CD8-positive, alpha-beta T cell (primary cell): ENCODE measurements at regions of chr1 and their contacts with region 1.

Region 1: GRCh38 chr1:247390116-247390791 is 25.7 kb upstream of the NLRP3 start:
- DNase-seq: peak; percentile 69 to 92 (median 82)
- ATAC-seq: peak; percentile 98
- H3K4me3 ChIP-seq: peak overlapping the region in 1 of 2 experiments; percentile 31
- H3K4me3 Mint-ChIP-seq: peak overlapping the region; percentile 71
- H3K27ac ChIP-seq: peak overlapping the region in 1 of 2 experiments; percentile 17
- H3K27ac Mint-ChIP-seq: peak overlapping the region; percentile 80
- H3K4me1 ChIP-seq: no peaks in the 10 kb centered on the region
- H3K4me1 Mint-ChIP-seq: peaks cover 12% of the 10 kb centered on the region
- H3K27me3 ChIP-seq: no peaks in the 10 kb centered on the region
- H3K27me3 Mint-ChIP-seq: no peaks in the 10 kb centered on the region
- CTCF ChIP-seq: peak; percentile 90

Region 2: DNA sequence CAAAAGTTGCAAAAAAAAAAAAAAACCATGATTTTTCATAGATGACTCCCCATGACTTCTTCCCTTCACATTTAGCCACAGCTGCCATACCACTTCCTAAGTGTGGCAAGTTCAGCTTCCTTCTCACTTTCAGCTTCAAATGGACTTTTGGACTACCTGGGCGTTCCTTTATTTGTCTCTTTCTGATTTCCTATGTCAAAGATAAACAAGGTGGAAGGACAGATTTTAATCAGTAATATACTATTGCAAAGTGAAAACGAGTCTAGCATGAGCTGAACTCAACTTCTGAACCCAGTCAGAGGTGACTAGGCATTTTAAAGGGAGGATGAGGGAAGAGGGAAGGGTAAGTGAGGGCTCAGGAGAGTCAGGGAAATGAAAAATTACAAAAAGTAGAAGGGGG is 680.4 kb before region 1 on chr1:
- CTCF ChIA-PET with region 1: no interaction called
- POLR2A ChIA-PET with region 1: no interaction called
- intact Hi-C with region 1: no loop called
- DNase-seq: no peak
- ATAC-seq: no peak
- H3K4me3 ChIP-seq: no peak overlapping the region
- H3K4me3 Mint-ChIP-seq: no peak overlapping the region
- H3K27ac ChIP-seq: no peak overlapping the region
- H3K27ac Mint-ChIP-seq: no peak overlapping the region
- H3K4me1 ChIP-seq: no peaks in the 10 kb centered on the region
- H3K4me1 Mint-ChIP-seq: peaks cover 1% of the 10 kb centered on the region
- H3K27me3 ChIP-seq: no peaks in the 10 kb centered on the region
- H3K27me3 Mint-ChIP-seq: peaks cover 7% of the 10 kb centered on the region
- CTCF ChIP-seq: no peak

Region 3: DNA sequence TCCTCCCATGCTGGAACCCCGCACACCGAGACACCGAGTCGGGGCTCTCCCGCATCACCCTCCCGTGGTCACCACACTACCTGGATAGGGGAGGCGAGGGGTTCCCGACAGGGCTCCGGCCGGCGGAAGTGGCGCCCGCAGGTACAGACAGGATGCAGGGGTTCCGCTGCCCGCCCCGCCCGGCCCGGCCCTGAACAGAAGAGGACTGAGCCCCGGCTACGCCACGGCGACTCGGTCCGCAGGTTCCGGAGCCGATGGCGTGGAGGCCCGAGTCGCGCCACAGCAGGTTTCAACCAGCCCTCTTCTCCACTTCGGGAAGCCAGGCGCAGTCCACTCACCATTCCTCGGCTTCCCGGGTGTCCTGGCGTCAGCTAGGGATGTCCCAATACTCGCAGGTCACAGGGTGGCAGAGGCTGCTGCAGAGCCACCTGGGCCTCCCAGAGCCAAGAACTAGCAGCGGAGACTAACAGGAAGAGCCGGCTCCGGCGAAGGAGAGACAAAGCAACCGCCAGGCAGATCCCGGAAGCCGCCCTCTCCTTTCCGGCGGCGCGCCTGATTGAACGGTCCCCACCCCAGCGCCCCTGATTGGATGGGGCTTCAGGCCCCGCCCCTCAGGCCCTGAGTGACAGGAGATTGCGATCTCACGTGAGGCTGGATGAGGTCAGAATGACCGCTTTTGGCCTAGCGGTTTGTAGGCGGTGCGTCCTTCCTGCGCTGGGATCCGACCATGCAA is 286.2 kb before region 1 on chr1 and contains the start of gene ZNF669:
- CTCF ChIA-PET with region 1: no interaction called
- POLR2A ChIA-PET with region 1: no interaction called
- intact Hi-C with region 1: loop called in 1 of 2 experiments (anchors 5 kb)
- DNase-seq: peak; percentile 83 to 94 (median 91)
- ATAC-seq: peak; percentile 98
- H3K4me3 ChIP-seq: peak within 1 kb of the TSS; percentile 74 to 96
- H3K4me3 Mint-ChIP-seq: peak within 1 kb of the TSS; percentile 89
- H3K27ac ChIP-seq: peak within 1 kb of the TSS; percentile 62 to 85
- H3K27ac Mint-ChIP-seq: peak within 1 kb of the TSS; percentile 85
- H3K4me1 ChIP-seq: peaks cover 9% of the 10 kb centered on the region
- H3K4me1 Mint-ChIP-seq: peaks cover 21% of the 10 kb centered on the region
- H3K27me3 ChIP-seq: no peaks in the 10 kb centered on the region
- H3K27me3 Mint-ChIP-seq: peaks cover 20% of the 10 kb centered on the region
- CTCF ChIP-seq: no peak
- total RNA-seq, gene ZNF669: 15.5 to 23.2 TPM

Region 4: GRCh38 chr1:247401310-247402119 is 11.3 kb after region 1 on chr1:
- CTCF ChIA-PET with region 1: interaction called, 15 read pairs
- POLR2A ChIA-PET with region 1: no interaction called
- intact Hi-C with region 1: no loop called
- DNase-seq: no peak
- ATAC-seq: no peak
- H3K4me3 ChIP-seq: no peak overlapping the region
- H3K4me3 Mint-ChIP-seq: no peak overlapping the region
- H3K27ac ChIP-seq: no peak overlapping the region
- H3K27ac Mint-ChIP-seq: no peak overlapping the region
- H3K4me1 ChIP-seq: peaks cover 2% of the 10 kb centered on the region
- H3K4me1 Mint-ChIP-seq: peaks cover 1% of the 10 kb centered on the region
- H3K27me3 ChIP-seq: no peaks in the 10 kb centered on the region
- H3K27me3 Mint-ChIP-seq: no peaks in the 10 kb centered on the region
- CTCF ChIP-seq: no peak

Region 5: DNA sequence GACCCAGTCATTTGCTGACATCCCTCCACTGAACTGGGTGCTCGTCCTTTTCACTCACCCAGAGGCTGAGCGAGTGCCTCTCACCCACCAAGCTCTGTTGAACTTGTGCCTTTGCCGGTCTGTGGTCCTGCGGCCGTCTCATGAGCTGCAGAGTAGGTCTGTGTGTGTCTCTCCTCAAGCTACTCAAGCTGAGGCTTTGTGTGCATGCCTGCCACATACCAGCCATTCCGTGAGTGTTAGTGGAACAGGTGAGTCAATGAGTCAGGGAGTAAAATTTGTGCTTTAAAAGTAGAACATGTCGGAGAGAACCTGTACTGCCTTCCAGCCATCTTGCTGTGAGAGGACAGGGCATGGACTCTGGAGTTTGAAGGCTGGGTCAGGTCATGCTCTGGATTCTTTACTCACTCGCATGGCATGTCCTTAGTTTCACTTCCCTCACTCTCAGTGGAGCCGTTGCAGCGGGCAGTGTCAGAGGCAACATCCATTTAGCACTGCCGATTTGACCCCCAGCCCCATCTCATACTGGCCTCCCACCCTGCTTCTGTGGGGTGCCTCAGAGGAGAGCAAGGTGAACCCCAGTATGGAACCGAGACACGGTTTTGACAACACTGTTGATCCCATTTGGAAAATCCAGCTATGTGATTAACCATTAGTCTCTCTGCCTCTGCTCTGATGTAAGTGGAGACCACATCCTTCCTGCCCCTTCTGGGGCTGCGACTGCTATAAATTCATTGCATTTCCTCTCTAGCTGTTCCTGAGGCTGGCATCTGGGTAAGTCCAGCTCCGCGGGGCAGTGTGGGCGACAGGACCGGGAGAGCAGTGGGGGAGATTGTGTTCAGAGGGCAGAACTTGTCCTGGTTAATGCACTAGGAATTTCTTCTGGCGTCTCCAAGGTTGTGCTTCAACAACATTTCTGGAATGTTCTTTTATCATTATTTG is 25.4 kb after region 1 on chr1 and contains the start of gene NLRP3:
- CTCF ChIA-PET with region 1: interaction called, 17 read pairs
- POLR2A ChIA-PET with region 1: interaction called, 12 read pairs
- intact Hi-C with region 1: no loop called
- DNase-seq: peak; percentile 10 to 74 (median 48)
- ATAC-seq: peak; percentile 70
- H3K4me3 ChIP-seq: peak within 1 kb of the TSS; percentile 51 to 56
- H3K4me3 Mint-ChIP-seq: peak within 1 kb of the TSS; percentile 92
- H3K27ac ChIP-seq: peak within 1 kb of the TSS; percentile 10 to 32
- H3K27ac Mint-ChIP-seq: peak within 1 kb of the TSS; percentile 71
- H3K4me1 ChIP-seq: peaks cover 21% of the 10 kb centered on the region
- H3K4me1 Mint-ChIP-seq: peaks cover 42% of the 10 kb centered on the region
- H3K27me3 ChIP-seq: no peaks in the 10 kb centered on the region
- H3K27me3 Mint-ChIP-seq: no peaks in the 10 kb centered on the region
- CTCF ChIP-seq: no peak
- total RNA-seq, gene NLRP3: 3.7 to 4.1 TPM

Region 6: DNA sequence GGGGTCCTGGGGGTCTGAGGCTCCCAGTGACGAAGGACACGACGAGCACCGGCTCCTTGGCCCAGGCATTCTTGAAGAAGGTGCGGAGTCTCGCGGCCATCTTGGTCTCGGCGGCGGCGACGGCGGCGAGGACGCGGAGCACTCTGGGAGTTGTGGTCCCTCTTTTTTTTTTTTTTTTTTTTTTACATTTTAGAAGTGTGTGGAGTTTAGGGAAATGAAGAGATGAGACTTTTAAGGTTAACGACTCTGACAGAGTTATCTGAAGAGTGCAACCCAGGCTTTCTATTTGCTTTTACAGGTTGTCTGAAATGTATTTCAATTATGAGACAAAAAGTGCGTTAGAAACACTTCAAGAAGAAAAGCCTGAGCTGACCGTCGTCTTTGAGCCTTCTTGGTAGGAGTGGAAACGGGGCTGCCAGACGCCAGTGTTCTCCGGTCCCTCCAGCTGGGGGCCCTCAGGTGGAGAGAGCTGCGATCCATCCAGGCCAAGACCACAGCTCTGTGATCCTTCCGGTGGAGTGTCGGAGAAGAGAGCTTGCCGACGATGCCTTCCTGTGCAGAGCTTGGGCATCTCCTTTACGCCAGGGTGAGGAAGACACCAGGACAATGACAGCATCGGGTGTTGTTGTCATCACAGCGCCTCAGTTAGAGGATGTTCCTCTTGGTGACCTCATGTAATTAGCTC is 58.0 kb after region 1 on chr1:
- CTCF ChIA-PET with region 1: interaction called, 10 read pairs
- POLR2A ChIA-PET with region 1: no interaction called
- intact Hi-C with region 1: loop called in 1 of 2 experiments (anchors 10 kb)
- DNase-seq: peak in 7 of 9 experiments; percentile 4 to 56 (median 27)
- ATAC-seq: no peak
- H3K4me3 ChIP-seq: peak overlapping the region in 1 of 2 experiments; percentile 33
- H3K4me3 Mint-ChIP-seq: peak overlapping the region; percentile 15
- H3K27ac ChIP-seq: no peak overlapping the region
- H3K27ac Mint-ChIP-seq: no peak overlapping the region
- H3K4me1 ChIP-seq: no peaks in the 10 kb centered on the region
- H3K4me1 Mint-ChIP-seq: peaks cover 6% of the 10 kb centered on the region
- H3K27me3 ChIP-seq: no peaks in the 10 kb centered on the region
- H3K27me3 Mint-ChIP-seq: no peaks in the 10 kb centered on the region
- CTCF ChIP-seq: no peak

Region 7: DNA sequence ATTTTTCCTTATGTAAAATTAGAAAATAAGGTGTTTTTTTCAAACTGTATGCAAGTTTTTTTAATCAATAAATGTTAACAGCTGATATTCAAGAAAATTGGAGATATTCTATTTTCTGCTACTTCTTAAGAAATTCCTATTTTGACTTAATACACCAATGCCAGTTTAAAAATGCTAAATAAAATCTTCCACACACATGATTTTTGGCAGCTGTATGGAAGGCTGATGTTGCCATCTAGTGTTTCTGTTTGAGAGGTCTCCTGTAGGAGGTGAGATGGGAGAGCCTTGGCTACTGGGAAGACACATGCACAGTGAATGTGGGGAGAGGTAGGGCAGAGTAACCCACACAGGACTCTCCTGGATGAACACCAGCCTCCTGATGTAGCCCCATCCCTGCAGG is 96.8 kb after region 1 on chr1:
- CTCF ChIA-PET with region 1: interaction called, 178 read pairs
- POLR2A ChIA-PET with region 1: interaction called, 4 read pairs
- intact Hi-C with region 1: loop called (anchors 1 kb)
- DNase-seq: peak in 7 of 9 experiments; percentile 6 to 71 (median 34)
- ATAC-seq: peak; percentile 65
- H3K4me3 ChIP-seq: no peak overlapping the region
- H3K4me3 Mint-ChIP-seq: no peak overlapping the region
- H3K27ac ChIP-seq: no peak overlapping the region
- H3K27ac Mint-ChIP-seq: no peak overlapping the region
- H3K4me1 ChIP-seq: no peaks in the 10 kb centered on the region
- H3K4me1 Mint-ChIP-seq: no peaks in the 10 kb centered on the region
- H3K27me3 ChIP-seq: no peaks in the 10 kb centered on the region
- H3K27me3 Mint-ChIP-seq: peaks cover 3% of the 10 kb centered on the region
- CTCF ChIP-seq: peak; percentile 78

Region 8: DNA sequence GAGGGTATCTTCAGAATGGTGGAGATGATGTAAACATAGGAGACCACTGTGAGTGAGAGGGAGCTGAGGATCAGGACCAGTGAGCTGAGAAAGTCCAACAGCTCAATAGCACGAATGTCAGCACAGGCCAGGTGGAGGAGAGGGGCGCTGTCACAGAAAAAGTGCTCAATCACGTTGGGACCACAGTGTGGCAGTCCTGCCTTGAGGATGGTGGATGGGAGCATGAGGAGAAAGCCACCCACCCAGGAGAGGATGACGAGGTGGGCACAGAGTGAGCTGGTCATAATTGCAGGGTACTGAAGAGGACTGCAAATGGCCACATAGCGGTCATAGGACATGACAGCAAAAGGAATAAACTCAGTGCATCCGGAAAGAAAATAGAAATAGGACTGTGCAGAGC is 443.3 kb after region 1 on chr1:
- CTCF ChIA-PET with region 1: no interaction called
- POLR2A ChIA-PET with region 1: no interaction called
- intact Hi-C with region 1: no loop called
- DNase-seq: no peak
- ATAC-seq: no peak
- H3K4me3 ChIP-seq: no peak overlapping the region
- H3K4me3 Mint-ChIP-seq: no peak overlapping the region
- H3K27ac ChIP-seq: no peak overlapping the region
- H3K27ac Mint-ChIP-seq: no peak overlapping the region
- H3K4me1 ChIP-seq: no peaks in the 10 kb centered on the region
- H3K4me1 Mint-ChIP-seq: no peaks in the 10 kb centered on the region
- H3K27me3 ChIP-seq: no peaks in the 10 kb centered on the region
- H3K27me3 Mint-ChIP-seq: peaks cover 4% of the 10 kb centered on the region
- CTCF ChIP-seq: no peak